Transverse colon (tissue), 4 donors: ENCODE measurements at regions of chr7 and their contacts with region 1.

Region 1: DNA sequence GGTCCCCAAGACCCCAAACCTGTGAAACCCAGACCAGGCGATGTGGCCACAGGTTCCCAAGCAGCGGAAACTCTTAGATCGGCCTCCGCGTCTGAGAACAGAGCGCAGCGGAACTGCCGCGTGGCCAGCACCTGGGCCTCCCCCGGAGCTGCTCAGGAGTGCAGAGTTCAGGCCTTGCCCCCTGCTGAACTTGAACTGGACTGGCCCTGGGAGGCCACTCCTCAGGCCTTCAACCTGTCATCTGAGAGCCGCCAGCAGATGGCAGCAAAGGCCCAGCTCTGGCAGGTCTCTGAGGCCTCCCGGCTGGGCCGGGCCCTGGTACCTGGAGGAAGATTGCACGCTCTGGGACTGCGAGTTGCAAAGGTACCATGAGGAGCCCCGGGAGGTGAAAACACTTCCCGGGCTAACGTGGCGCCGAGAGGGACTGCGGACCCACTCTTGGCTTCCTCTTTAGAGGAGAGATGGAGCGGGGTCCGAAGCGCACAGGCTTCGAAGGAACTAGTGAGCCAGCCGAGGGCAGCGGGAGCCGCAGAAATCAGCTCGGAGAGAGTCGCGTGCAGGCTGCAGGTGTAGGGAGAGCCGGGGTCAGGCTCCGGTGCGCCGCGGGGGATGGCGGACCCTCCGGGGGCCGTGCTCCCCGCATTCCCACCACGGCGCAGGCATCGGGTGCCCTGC is 89.1 kb downstream of the PAXIP1 start:
- DNase-seq: peak; percentile 89
- H3K4me3 ChIP-seq: peak overlapping the region in 3 of 4 donors; percentile 2 to 42 (median 18)
- H3K27ac ChIP-seq: no peak overlapping the region
- H3K4me1 ChIP-seq: peaks cover 0 to 8% (median 3%) of the 10 kb centered on the region in 4 donors
- H3K27me3 ChIP-seq: peaks cover 25% of the 10 kb centered on the region
- CTCF ChIP-seq: peak; percentile 80 to 92 (median 86)
- EP300 ChIP-seq: no peak
- POLR2A ChIP-seq: no peak

Region 2: GRCh38 chr7:154844499-154844898 is 69.3 kb before region 1 on chr7:
- in situ Hi-C with region 1: no loop called
- intact Hi-C with region 1: no loop called
- DNase-seq: no peak
- H3K4me3 ChIP-seq: no peak overlapping the region
- H3K27ac ChIP-seq: no peak overlapping the region
- H3K4me1 ChIP-seq: peaks cover 4 to 22% (median 11%) of the 10 kb centered on the region in 4 donors
- H3K27me3 ChIP-seq: no peaks in the 10 kb centered on the region
- CTCF ChIP-seq: no peak
- EP300 ChIP-seq: no peak
- POLR2A ChIP-seq: no peak

Region 3: DNA sequence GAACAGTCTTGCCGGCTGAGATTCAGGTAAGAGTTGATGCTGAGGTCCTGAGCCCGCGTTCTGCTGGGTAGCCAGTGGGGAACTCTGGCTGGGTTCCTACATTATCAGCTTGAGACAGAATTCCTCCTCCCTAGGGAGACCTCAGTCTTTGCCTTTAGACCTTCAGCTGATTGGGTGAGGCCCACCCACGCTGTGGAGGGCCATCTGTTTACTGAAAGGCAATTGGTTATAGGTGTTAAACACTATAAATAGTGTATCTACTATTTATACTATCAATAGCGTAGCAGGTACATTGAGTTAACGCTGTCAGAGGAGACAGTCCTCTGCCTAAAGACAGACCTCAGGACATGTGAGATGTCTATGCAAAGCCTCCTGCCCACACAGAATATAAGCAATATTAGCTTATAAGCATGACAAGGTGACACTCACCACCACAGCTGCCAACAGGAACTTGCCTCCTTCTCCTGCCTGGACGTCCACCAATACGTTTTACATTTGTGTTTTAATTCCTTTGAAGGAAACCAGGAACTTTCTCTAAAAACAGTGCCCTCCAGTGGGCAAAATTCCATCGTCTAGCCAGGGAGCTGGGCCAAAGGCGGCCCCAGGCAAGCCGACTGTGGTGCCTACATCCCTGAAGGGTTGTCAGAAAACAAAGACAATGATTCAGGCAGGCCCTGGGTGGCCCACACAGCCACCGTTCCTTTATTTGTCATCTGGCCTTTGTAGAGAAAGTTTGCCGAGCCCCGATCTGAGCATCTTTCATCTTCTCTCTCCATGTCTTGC is 442.7 kb after region 1 on chr7:
- in situ Hi-C with region 1: loop called in 1 of 4 experiments (anchors 25 kb)
- intact Hi-C with region 1: no loop called
- DNase-seq: no peak
- H3K4me3 ChIP-seq: no peak overlapping the region
- H3K27ac ChIP-seq: no peak overlapping the region
- H3K4me1 ChIP-seq: no peaks in the 10 kb centered on the region
- H3K27me3 ChIP-seq: peaks cover 55% of the 10 kb centered on the region
- CTCF ChIP-seq: peak in 1 of 5 experiments; percentile 20
- EP300 ChIP-seq: no peak
- POLR2A ChIP-seq: no peak